ENCODE measurements at regions of chr5 and their contacts with region 1.

Region 1: GRCh38 chr5:37370864-37371726 is at the start of gene NUP155:
- DNase-seq: peak; percentile 79
- ATAC-seq: peak; percentile 94
- H3K4me3 Mint-ChIP-seq: peak within 1 kb of the TSS; percentile 99
- H3K27ac Mint-ChIP-seq: peak within 1 kb of the TSS; percentile 97
- H3K4me1 Mint-ChIP-seq: peaks cover 32% of the 10 kb centered on the region
- H3K27me3 Mint-ChIP-seq: no peaks in the 10 kb centered on the region
- CTCF ChIP-seq: no peak
- total RNA-seq, gene NUP155: 37.2 and 38.7 TPM in 2 replicates

Region 2: DNA sequence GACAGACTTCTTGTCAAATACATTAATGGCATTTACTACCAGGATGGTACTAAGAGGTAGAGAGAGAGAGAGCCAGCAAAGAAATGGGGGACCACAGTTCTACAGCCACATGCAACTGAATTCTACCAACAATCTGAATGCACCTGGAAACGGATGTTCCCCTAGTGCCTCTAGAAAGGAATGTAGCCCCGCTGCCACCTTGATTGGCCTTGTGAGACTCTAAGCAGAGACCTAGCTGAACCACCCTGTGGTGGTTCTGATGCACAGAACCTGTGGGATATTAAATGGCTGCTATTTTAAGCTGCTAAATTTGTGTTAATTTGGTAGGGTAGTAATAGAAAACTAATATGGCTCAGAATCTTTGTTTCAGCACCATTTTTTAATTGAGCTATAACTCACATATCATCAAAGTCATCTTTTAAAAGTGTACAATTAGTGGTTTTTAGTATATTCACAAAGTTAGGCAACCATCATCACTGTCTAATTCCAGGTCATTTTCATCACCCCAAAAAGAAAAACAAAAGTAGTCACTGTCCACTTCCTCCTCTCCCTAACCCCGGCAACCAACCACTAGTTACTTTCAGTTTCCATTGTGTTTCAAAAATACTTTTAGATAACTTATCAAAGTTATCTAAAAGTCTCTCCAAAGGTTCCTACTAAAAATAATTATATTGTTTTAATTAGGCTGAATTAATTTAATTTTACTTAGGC is 173.6 kb before region 1 on chr5:
- CTCF ChIA-PET with region 1: no interaction called
- POLR2A ChIA-PET with region 1: interaction called, 4 read pairs
- intact Hi-C with region 1: loop called (anchors 5 kb)
- DNase-seq: no peak
- ATAC-seq: peak; percentile 58
- H3K4me3 Mint-ChIP-seq: peak overlapping the region; percentile 74
- H3K27ac Mint-ChIP-seq: peak overlapping the region; percentile 87
- H3K4me1 Mint-ChIP-seq: peaks cover 16% of the 10 kb centered on the region
- H3K27me3 Mint-ChIP-seq: no peaks in the 10 kb centered on the region
- CTCF ChIP-seq: no peak

Region 3: DNA sequence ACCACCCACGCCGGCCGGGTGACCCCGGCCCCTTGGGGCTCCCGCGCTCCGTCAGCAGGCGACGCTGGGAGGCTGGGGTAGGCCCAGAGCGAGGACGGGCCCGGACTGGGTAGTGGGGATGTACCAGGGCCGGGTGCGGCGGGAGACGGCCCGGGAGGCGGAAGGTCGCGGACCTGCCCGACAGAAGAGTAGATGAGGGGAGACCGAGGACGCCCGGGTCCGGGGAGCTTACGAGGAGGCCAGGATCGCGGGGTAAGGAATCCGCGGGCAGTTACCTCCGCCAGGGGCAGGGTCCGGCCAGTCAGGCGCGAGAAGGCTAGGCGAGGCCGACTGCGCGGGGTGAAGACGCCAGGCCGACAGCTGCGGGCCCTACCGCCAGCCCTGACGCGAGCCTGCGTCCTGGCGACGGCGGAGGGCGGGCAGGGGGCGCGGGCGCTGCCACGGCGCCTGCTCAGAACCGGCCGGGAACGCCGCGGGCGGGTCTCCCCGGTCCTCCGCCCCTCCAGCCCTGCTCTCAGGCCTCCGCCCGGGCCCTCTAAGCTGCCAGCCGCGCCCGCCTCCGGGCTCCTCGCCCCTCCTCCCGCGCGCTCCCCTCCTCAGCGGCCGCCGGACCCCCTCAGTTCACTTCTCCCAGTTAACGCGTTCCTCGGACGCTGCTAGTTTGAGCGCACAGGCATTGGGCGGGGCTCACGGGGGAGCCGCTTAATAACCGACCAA is 122.0 kb before region 1 on chr5 and contains the start of gene CPLANE1:
- CTCF ChIA-PET with region 1: no interaction called
- POLR2A ChIA-PET with region 1: interaction called, 9 read pairs
- intact Hi-C with region 1: loop called (anchors 1 kb)
- DNase-seq: peak; percentile 72
- ATAC-seq: peak; percentile 89
- H3K4me3 Mint-ChIP-seq: peak within 1 kb of the TSS; percentile 91
- H3K27ac Mint-ChIP-seq: peak within 1 kb of the TSS; percentile 76
- H3K4me1 Mint-ChIP-seq: peaks cover 8% of the 10 kb centered on the region
- H3K27me3 Mint-ChIP-seq: no peaks in the 10 kb centered on the region
- CTCF ChIP-seq: no peak
- total RNA-seq, gene CPLANE1: 8.8 and 11.7 TPM in 2 replicates

Measured in activated B cell treated with CpG ODN at 0.5 μM for 24 hours (primary cell).